Body of pancreas (tissue), 4 donors: ENCODE measurements at regions of chr15 and their contacts with region 1.

Region 1: DNA sequence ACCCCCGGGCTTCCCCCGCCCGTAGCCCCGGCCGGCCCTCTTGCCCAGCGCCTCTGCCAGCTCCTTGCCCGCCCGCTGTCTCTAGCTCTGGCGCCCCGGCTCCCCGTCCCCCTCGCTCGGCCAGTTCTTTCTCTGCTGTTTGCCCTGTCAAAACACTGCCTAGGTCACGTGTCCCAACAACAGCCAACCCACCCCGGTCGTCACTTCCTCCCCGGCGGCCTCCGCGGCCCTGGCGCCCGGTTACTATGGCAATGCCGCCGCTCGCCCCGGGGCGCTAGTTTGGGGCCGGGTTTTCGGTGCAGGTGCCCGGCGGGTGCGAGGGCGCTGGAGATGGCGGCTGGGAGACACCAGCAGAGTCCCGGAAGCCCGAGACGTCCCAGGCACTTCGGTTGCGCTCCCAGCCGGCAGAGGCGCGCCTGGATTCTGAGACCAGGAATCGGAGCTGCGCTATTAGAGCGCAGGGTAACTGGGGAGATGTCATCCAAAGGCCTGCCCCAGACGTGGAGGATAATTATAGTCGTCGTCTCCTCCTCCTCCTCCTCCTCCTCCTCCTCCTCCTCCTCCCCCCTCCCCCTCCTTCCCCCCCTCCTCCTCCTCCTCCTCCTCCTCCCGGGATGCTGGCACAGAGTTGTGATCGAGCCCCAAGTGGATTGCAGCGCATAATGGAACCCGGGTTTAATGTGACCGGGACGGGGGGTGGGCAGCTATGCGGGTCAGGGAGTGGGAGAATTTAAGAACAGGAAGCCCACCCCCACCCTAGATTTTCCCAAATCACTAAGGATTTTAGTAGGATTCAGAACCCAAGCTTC is at the start of gene ATOSA:
- DNase-seq: peak; percentile 92 to 94 (median 92)
- ATAC-seq: peak; percentile 89
- H3K4me3 ChIP-seq: peak within 1 kb of the TSS; percentile 83 to 94
- H3K27ac ChIP-seq: peak within 1 kb of the TSS; percentile 95 to 99 (median 98)
- H3K4me1 ChIP-seq: peaks cover 25% of the 10 kb centered on the region
- H3K27me3 ChIP-seq: no peaks in the 10 kb centered on the region
- CTCF ChIP-seq: peak in 2 of 7 experiments; percentile 28 to 30
- POLR2A ChIP-seq: peak; percentile 76 to 91 (median 88)
- total RNA-seq, gene ATOSA: 37.2 to 63.6 TPM

Region 2: GRCh38 chr15:52626671-52627369 is 52.6 kb before region 1 on chr15:
- intact Hi-C with region 1: loop called (anchors 10 kb)
- DNase-seq: no peak
- ATAC-seq: no peak
- H3K4me3 ChIP-seq: no peak overlapping the region
- H3K27ac ChIP-seq: no peak overlapping the region
- H3K4me1 ChIP-seq: peaks cover 11% of the 10 kb centered on the region
- H3K27me3 ChIP-seq: no peaks in the 10 kb centered on the region
- CTCF ChIP-seq: no peak
- POLR2A ChIP-seq: no peak

Region 3: GRCh38 chr15:52728899-52729298 is 49.5 kb after region 1 on chr15:
- intact Hi-C with region 1: no loop called
- DNase-seq: no peak
- ATAC-seq: no peak
- H3K4me3 ChIP-seq: no peak overlapping the region
- H3K27ac ChIP-seq: no peak overlapping the region
- H3K4me1 ChIP-seq: peaks cover 21% of the 10 kb centered on the region
- H3K27me3 ChIP-seq: no peaks in the 10 kb centered on the region
- CTCF ChIP-seq: no peak
- POLR2A ChIP-seq: no peak